ENCODE measurements at regions of chr1 and their contacts with region 1.

Region 1: DNA sequence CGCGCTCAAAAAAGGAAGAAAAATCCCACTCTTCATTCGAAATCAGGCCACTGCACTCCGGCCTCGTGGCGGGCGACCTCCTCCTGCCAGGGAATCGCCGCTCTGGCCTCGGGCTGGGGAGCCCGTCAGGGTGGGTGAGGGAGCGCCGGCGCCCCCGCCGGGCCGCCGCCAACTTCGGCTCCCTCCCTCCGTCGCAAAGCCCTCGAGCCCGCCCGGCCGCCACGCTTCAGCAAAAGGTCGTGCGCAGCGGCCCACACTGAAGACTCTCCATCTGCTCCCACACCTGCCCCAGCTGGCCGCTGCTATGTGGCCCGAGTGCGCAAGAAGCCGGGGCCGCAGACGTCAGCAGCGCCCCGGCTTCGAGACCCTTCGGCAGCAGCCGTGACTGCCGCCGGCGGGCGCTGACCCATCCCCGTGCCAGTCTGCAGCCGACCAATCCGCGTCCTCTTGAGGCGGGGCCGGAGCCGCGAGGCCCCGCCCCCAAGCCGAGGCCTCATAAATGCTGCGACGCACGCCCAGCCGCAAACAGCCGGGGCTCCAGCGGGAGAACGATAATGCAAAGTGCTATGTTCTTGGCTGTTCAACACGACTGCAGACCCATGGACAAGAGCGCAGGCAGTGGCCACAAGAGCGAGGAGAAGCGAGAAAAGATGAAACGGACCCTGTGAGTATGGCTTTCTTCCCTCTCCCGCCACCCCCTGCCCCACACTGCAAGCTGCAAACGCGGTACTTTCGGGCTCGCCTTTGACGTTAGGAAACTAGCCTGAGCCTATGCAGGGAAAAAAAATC is at the start of gene RGS2:
- DNase-seq: peak; percentile 95
- ATAC-seq: peak; percentile 85
- H3K4me3 ChIP-seq: peak within 1 kb of the TSS; percentile 58 to 99 (median 90)
- H3K4me3 Mint-ChIP-seq: peak within 1 kb of the TSS; percentile 96
- H3K27ac ChIP-seq: peak within 1 kb of the TSS; percentile 65 to 76
- H3K27ac Mint-ChIP-seq: peak within 1 kb of the TSS; percentile 95
- H3K4me1 ChIP-seq: peaks cover 23 to 24% of the 10 kb centered on the region in 2 donors
- H3K4me1 Mint-ChIP-seq: peaks cover 46% of the 10 kb centered on the region
- H3K27me3 ChIP-seq: peaks cover 0 to 3% (median 0%) of the 10 kb centered on the region in 4 experiments
- H3K27me3 Mint-ChIP-seq: no peaks in the 10 kb centered on the region
- CTCF ChIP-seq: peak; percentile 15
- total RNA-seq, gene RGS2: 224 and 232 TPM in 2 replicates

Region 2: GRCh38 chr1:192516776-192517297 is 291.9 kb before region 1 on chr1:
- CTCF ChIA-PET with region 1: no interaction called
- POLR2A ChIA-PET with region 1: interaction called, 5 read pairs
- intact Hi-C with region 1: loop called (anchors 5 kb)
- DNase-seq: peak; percentile 92
- ATAC-seq: peak; percentile 96
- H3K4me3 ChIP-seq: peak overlapping the region in 2 of 5 experiments; percentile 7 to 44
- H3K4me3 Mint-ChIP-seq: peak overlapping the region; percentile 80
- H3K27ac ChIP-seq: peak overlapping the region in 1 of 2 donors; percentile 57
- H3K27ac Mint-ChIP-seq: peak overlapping the region; percentile 64
- H3K4me1 ChIP-seq: peaks cover 43 to 51% of the 10 kb centered on the region in 2 donors
- H3K4me1 Mint-ChIP-seq: peaks cover 52% of the 10 kb centered on the region
- H3K27me3 ChIP-seq: peaks cover 0 to 17% (median 7%) of the 10 kb centered on the region in 4 experiments
- H3K27me3 Mint-ChIP-seq: peaks cover 18% of the 10 kb centered on the region
- CTCF ChIP-seq: no peak

Region 3: DNA sequence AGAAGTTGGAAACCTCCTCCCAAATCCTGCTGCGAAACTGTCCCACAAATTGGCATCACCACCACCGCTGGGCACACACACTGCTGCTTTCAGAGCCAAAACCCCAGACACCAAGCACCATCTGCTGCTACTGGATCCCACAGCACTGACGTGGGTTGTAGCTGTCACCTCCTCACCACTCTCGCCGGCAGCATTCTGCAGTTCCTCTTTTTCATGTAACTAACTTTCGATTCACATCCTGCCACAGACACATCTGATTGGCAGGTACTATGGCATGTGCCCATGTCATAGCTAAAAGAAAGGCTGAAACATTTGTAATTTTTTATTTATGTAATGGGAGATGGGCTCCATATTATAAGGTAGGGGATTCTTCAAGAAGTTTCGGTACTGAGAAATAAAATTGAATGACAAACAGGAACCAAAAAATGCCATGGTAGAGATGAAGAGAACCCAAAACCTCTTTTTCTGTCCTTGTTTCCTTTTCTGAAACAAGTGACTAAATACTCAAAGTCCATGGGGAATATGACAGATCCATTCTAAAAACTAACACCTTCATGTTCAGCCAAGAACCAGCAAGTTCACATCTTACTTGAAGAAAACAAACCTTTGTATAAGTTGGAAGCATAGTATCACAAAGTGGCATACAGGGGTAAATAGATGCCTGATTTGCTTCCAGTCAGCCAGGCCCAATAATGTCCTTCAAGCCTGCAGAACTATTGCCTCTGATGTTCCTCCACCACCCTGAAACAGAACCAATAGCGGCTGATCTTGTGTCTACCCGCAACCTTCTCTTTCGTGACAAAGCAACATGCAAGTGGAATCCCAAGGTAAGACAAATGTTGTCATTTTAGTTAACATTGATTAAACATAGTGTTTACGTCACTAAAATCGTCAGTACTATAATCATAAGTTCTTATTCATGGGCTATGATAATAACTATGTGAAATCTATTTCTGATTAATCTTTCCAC is 199.3 kb before region 1 on chr1:
- CTCF ChIA-PET with region 1: interaction called, 14 read pairs
- POLR2A ChIA-PET with region 1: no interaction called
- intact Hi-C with region 1: loop called (anchors 1 kb)
- DNase-seq: peak; percentile 92
- ATAC-seq: peak; percentile 93
- H3K4me3 ChIP-seq: peak overlapping the region in 1 of 5 experiments; percentile 0
- H3K4me3 Mint-ChIP-seq: peak overlapping the region; percentile 47
- H3K27ac ChIP-seq: peak overlapping the region; percentile 22 to 66
- H3K27ac Mint-ChIP-seq: peak overlapping the region; percentile 87
- H3K4me1 ChIP-seq: peaks cover 24 to 31% of the 10 kb centered on the region in 2 donors
- H3K4me1 Mint-ChIP-seq: peaks cover 31% of the 10 kb centered on the region
- H3K27me3 ChIP-seq: peaks cover 2 to 17% (median 5%) of the 10 kb centered on the region in 4 experiments
- H3K27me3 Mint-ChIP-seq: peaks cover 11% of the 10 kb centered on the region
- CTCF ChIP-seq: no peak

Region 4: DNA sequence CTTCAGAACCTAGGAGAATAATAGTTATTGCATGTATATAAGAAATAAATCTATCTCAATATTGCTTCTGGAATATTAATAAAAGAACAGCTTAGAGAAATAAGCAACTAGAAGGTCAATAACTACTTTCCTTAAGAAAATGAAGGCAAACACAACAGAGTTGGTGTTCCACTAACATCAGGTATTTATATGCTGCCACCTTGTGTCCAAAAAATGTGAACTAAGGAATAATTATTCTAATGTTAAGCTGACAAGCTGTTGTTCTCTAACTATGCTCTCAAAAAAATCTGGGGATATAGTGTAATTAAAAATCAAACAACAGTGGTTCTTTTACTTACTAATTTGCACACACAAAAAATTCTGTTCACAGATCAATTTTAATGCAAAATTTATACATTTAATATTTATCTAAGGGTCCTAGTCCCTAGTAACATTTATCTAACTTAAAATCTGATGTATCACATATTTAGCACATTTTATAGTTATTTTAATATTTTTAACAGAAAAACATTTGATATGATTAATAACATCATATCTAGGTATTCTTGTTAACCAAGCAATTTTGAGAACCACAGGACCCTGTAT is 210.8 kb after region 1 on chr1:
- CTCF ChIA-PET with region 1: interaction called, 201 read pairs
- POLR2A ChIA-PET with region 1: no interaction called
- intact Hi-C with region 1: loop called (anchors 1 kb)
- DNase-seq: peak; percentile 58
- ATAC-seq: peak; percentile 64
- H3K4me3 ChIP-seq: no peak overlapping the region
- H3K4me3 Mint-ChIP-seq: no peak overlapping the region
- H3K27ac ChIP-seq: no peak overlapping the region
- H3K27ac Mint-ChIP-seq: no peak overlapping the region
- H3K4me1 ChIP-seq: no peaks in the 10 kb centered on the region
- H3K4me1 Mint-ChIP-seq: no peaks in the 10 kb centered on the region
- H3K27me3 ChIP-seq: no peaks in the 10 kb centered on the region
- H3K27me3 Mint-ChIP-seq: no peaks in the 10 kb centered on the region
- CTCF ChIP-seq: peak; percentile 71

Region 5: DNA sequence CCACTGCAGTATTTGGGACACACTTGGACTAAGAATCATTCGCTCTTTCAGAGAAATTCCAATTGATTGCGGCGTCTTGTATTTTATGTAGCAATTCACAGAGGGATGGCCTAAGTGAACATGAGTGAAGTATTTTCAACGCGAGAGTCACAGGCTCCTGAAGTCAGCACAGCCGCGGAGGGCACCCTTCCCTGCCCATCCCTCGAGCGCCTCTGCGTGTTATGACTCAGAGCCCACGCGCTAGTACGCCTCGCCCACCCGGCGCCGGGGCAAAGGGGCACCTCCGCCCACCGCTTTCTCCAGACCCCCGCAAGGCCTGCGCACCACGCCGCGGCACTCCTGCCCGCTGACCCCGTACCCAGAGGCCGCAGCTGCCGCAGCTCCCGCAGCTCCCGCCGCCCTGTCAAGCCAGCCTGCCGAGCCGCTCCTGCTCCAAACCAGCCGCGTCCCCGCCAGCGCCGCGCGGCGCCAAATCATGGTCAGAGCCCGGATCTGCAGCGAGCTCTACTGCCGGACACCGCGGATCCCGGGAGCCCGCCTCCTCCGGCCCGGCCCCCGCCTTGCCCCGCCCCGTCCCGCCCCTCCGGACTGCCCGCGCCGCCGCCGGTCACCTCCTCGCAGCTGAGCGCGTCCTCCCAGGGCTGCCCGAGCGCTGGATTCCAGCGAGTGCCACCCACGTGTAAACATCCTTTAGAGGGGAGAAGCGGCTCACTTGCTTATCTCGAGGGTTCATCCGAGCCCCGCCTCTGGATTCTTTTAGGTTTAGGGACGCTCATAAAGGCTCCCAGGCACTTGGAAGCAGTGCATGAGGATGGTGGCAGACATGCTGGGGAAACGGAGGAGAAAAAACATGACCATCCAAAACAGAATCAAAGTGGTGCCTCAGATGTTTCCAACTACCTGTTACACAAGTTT is 296.5 kb after region 1 on chr1 and contains the start of gene GLRX2:
- CTCF ChIA-PET with region 1: interaction called, 5 read pairs
- POLR2A ChIA-PET with region 1: no interaction called
- intact Hi-C with region 1: loop called (anchors 1 kb)
- DNase-seq: peak; percentile 65
- ATAC-seq: peak; percentile 83
- H3K4me3 ChIP-seq: peak within 1 kb of the TSS; percentile 62 to 99 (median 78)
- H3K4me3 Mint-ChIP-seq: peak within 1 kb of the TSS; percentile 97
- H3K27ac ChIP-seq: peak within 1 kb of the TSS in 1 of 2 donors; percentile 71
- H3K27ac Mint-ChIP-seq: peak within 1 kb of the TSS; percentile 83
- H3K4me1 ChIP-seq: peaks cover 8 to 13% of the 10 kb centered on the region in 2 donors
- H3K4me1 Mint-ChIP-seq: peaks cover 22% of the 10 kb centered on the region
- H3K27me3 ChIP-seq: no peaks in the 10 kb centered on the region
- H3K27me3 Mint-ChIP-seq: no peaks in the 10 kb centered on the region
- CTCF ChIP-seq: no peak
- total RNA-seq, gene GLRX2: 12.9 and 13.9 TPM in 2 replicates

Region 6: DNA sequence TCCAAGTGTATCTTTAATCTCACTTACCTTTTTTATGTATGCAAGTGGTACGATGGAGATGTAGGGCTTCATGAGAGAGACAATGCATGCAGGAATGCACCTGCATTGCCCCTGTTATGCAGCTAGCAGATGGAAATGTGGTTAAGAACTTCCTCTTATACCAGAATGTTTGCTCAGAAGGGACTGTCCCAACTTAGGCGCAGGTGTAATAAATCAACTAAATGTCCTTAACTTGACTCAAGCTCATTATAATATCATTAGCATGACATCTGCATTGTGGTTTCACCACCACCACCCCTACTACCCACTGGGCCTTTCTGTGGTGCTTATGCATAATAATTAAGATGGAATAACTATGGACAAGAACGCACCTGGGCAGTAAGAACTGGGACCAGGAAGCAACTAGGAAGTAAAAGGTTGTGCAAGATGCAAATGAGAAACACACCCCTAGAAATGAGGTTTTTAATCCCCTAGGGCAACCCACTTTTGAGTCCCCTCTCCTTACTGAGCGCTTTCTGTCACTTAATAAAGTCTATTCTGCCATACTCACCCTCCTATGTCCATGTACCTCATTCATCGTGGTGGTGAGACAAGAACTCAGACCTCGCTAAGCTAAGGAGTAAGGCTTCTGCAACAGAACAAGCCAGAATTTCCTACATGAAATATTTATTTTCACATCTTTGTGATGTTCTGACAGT is 1481.0 kb after region 1 on chr1:
- CTCF ChIA-PET with region 1: no interaction called
- POLR2A ChIA-PET with region 1: no interaction called
- intact Hi-C with region 1: loop called (anchors 2 kb)
- DNase-seq: peak; percentile 91
- ATAC-seq: peak; percentile 93
- H3K4me3 ChIP-seq: peak overlapping the region in 1 of 5 experiments; percentile 8
- H3K4me3 Mint-ChIP-seq: peak overlapping the region; percentile 27
- H3K27ac ChIP-seq: no peak overlapping the region
- H3K27ac Mint-ChIP-seq: peak overlapping the region; percentile 78
- H3K4me1 ChIP-seq: peaks cover 10% of the 10 kb centered on the region in 2 donors
- H3K4me1 Mint-ChIP-seq: peaks cover 20% of the 10 kb centered on the region
- H3K27me3 ChIP-seq: peaks cover 0 to 9% (median 2%) of the 10 kb centered on the region in 4 experiments
- H3K27me3 Mint-ChIP-seq: peaks cover 3% of the 10 kb centered on the region
- CTCF ChIP-seq: no peak